Esophagus squamous epithelium (tissue), 5 donors: ENCODE measurements at regions of chr1 and their contacts with region 1.

Region 1: GRCh38 chr1:11838349-11839272 is 9.0 kb downstream of the NPPA start:
- DNase-seq: peak; percentile 12
- H3K4me3 ChIP-seq: no peak overlapping the region
- H3K27ac ChIP-seq: no peak overlapping the region
- H3K4me1 ChIP-seq: no peaks in the 10 kb centered on the region
- H3K27me3 ChIP-seq: no peaks in the 10 kb centered on the region
- CTCF ChIP-seq: peak; percentile 89 to 96 (median 93)
- POLR2A ChIP-seq: no peak

Region 2: GRCh38 chr1:11893907-11894251 is 55.3 kb after region 1 on chr1:
- intact Hi-C with region 1: loop called (anchors 10 kb)
- DNase-seq: no peak
- H3K4me3 ChIP-seq: no peak overlapping the region
- H3K27ac ChIP-seq: no peak overlapping the region
- H3K4me1 ChIP-seq: no peaks in the 10 kb centered on the region
- H3K27me3 ChIP-seq: peaks cover 0 to 75% (median 10%) of the 10 kb centered on the region in 4 donors
- CTCF ChIP-seq: peak; percentile 69 to 90 (median 86)
- POLR2A ChIP-seq: no peak

Region 3: DNA sequence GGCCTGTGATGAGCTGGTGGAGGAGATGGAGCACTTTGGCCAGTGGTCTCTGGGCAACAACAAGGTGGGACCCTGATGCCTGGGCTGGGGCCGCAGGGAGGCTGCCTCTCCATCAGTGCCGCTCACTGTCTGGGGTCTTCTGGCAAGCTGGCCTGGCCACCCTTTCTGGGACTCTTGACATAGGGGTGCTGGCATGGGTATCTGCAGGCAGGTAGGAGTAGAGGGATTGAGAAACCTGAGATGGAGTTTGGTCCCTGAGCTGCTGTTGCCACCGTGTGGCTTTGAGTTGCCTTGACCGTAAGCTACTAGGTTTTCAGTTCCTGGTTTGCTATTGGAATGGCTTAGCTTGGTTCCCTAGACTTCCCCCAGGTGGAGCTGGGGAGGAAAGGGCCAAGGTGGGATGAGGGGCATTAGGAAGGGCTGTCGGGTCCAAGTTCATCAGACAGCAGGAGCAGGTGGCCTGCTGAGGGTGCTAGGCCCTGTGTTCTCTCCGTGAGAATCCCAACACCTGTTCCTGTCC is 128.5 kb after region 1 on chr1:
- intact Hi-C with region 1: loop called (anchors 10 kb)
- DNase-seq: no peak
- H3K4me3 ChIP-seq: no peak overlapping the region
- H3K27ac ChIP-seq: peak overlapping the region in 3 of 4 donors; percentile 69 to 86 (median 78)
- H3K4me1 ChIP-seq: peaks cover 0 to 52% (median 0%) of the 10 kb centered on the region in 3 donors
- H3K27me3 ChIP-seq: no peaks in the 10 kb centered on the region
- CTCF ChIP-seq: peak in 5 of 6 experiments; percentile 34 to 75 (median 53)
- POLR2A ChIP-seq: no peak